Pancreas (tissue), 10 donors: ENCODE measurements at regions of chr6 and their contacts with region 1.

Region 1: GRCh38 chr6:2196079-2196679 is 49.2 kb downstream of the GMDS start:
- DNase-seq: peak in 3 of 6 donors; percentile 24 to 45 (median 28)
- ATAC-seq: peak; percentile 80 to 95 (median 94)
- H3K4me3 ChIP-seq: no peak overlapping the region
- H3K27ac ChIP-seq: no peak overlapping the region
- H3K4me1 ChIP-seq: no peaks in the 10 kb centered on the region
- H3K27me3 ChIP-seq: no peaks in the 10 kb centered on the region
- CTCF ChIP-seq: peak; percentile 46 to 71 (median 58)

Region 2: DNA sequence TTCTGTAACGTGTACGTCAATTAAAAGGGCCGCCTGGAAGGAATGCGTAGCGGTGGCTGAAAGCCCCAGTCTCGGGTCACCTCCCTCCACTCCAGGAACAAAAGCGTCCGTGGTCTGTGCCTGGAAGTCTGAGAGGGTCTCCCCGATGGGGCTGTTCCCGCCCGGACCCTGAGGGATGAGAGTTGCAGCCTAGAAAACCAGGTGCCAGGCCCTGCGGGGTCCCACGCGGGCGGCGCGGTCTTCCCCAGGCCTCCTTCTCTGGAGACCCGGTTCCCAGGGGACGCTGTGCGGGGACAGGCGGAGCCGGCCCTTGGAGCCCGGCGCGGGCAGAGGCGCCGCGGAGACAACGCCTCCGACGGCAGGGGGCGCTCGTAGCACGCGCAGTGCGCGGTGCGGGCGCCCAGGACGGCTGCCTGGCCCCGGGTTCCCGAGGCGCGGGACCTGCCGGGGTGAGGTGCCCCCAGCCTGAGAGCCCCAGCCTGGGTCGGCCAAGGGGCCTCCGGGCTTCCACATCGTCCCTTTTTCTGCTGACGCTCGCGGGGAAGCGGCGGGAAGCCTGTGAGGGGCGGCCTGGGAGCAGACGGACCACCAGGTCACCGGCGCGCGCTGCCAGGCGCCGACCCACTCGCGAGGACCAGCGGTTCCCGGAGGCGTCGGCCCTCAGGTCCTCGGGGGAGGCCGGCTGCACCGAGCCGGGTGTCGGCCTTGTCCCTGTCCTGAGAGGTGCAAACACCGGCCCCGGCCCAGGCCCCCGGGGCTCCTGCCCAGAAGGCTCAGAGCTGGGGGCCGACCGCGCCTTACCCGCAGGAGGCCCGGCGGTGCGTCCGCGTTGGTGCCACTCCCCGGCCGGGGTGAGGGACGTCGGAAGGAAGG is 591.8 kb before region 1 on chr6:
- intact Hi-C with region 1: loop called in 2 of 3 experiments (anchors 2 to 5 kb)
- DNase-seq: peak; percentile 32 to 97 (median 78)
- ATAC-seq: peak; percentile 91 to 93 (median 92)
- H3K4me3 ChIP-seq: peak overlapping the region; percentile 26 to 68 (median 38)
- H3K27ac ChIP-seq: no peak overlapping the region
- H3K4me1 ChIP-seq: peaks cover 0 to 11% (median 6%) of the 10 kb centered on the region in 3 donors
- H3K27me3 ChIP-seq: peaks cover 0 to 39% (median 9%) of the 10 kb centered on the region in 4 donors
- CTCF ChIP-seq: peak; percentile 93 to 99 (median 95)

Region 3: DNA sequence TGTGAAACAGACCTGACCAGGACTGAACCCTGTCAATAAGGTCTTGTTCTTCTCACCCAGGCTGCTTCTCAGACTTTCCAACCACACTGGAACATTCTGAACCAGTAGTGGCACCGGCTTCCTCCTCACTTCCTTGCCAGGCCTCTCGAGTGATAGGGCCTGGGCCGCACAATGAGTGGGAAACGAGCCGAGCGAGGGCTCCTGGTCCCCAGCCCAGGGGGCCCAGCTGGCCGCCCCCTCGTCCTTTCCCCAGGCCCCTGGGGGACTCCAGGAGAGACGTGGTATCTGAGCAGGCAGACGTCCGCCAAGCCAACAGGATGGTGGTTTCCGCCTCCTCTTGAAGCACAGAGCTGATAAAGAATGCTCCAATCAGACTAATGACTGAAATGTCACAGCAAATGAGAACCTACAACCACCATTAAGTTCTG is 68.7 kb before region 1 on chr6:
- intact Hi-C with region 1: loop called in 1 of 3 experiments (anchors 10 kb)
- DNase-seq: no peak
- ATAC-seq: peak in 2 of 4 donors; percentile 21 to 25
- H3K4me3 ChIP-seq: no peak overlapping the region
- H3K27ac ChIP-seq: no peak overlapping the region
- H3K4me1 ChIP-seq: peaks cover 0 to 8% (median 6%) of the 10 kb centered on the region in 3 donors
- H3K27me3 ChIP-seq: no peaks in the 10 kb centered on the region
- CTCF ChIP-seq: no peak